CD8-positive, alpha-beta T cell (primary cell): ENCODE measurements at regions of chr16 and their contacts with region 1.

Region 1: GRCh38 chr16:10964039-10964890 is 19.9 kb downstream of the CLEC16A start:
- DNase-seq: peak; percentile 57 to 89 (median 82)
- ATAC-seq: peak; percentile 58
- H3K4me3 ChIP-seq: peak overlapping the region in 1 of 2 experiments; percentile 7
- H3K4me3 Mint-ChIP-seq: peak overlapping the region; percentile 18
- H3K27ac ChIP-seq: no peak overlapping the region
- H3K27ac Mint-ChIP-seq: peak overlapping the region; percentile 49
- H3K4me1 ChIP-seq: peaks cover 4% of the 10 kb centered on the region
- H3K4me1 Mint-ChIP-seq: peaks cover 16% of the 10 kb centered on the region
- H3K27me3 ChIP-seq: no peaks in the 10 kb centered on the region
- H3K27me3 Mint-ChIP-seq: no peaks in the 10 kb centered on the region
- CTCF ChIP-seq: peak; percentile 90

Region 2: GRCh38 chr16:10862432-10862831 is 101.8 kb before region 1 on chr16:
- CTCF ChIA-PET with region 1: no interaction called
- POLR2A ChIA-PET with region 1: no interaction called
- intact Hi-C with region 1: no loop called
- DNase-seq: peak in 1 of 9 experiments; percentile 35
- ATAC-seq: no peak
- H3K4me3 ChIP-seq: no peak overlapping the region
- H3K4me3 Mint-ChIP-seq: no peak overlapping the region
- H3K27ac ChIP-seq: no peak overlapping the region
- H3K27ac Mint-ChIP-seq: no peak overlapping the region
- H3K4me1 ChIP-seq: no peaks in the 10 kb centered on the region
- H3K4me1 Mint-ChIP-seq: no peaks in the 10 kb centered on the region
- H3K27me3 ChIP-seq: no peaks in the 10 kb centered on the region
- H3K27me3 Mint-ChIP-seq: peaks cover 13% of the 10 kb centered on the region
- CTCF ChIP-seq: no peak

Region 3: DNA sequence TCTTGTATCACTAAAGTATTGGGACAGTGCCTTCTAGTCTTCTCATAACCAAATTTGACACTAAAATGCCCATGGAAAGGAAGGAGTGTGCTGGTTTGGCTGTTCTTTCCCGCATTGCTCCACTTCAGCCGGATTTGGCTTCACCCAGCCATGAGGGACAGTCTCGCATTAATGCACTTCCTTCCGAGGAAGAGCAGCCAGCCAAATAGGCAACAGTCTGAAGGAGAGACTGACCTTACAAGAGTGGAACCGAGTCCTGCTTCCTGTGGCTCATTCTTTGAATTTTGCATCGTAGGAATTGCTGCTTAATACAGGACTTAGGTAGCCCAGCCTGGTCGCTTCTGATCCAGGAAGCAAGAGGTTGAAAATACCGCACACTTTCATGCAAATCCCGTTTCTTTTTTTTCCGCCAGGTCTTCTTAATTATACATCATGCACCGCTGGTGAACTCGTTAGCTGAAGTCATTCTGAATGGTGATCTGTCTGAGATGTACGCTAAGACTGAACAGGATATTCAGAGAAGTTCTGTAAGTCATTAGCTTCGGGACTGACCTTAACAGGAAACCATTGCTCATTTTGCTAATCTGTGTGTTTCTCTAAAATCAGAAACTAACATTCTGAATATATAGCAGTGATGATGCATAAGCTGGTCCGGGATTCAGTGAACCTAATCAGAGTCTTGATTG is 18.3 kb after region 1 on chr16:
- CTCF ChIA-PET with region 1: interaction called, 27 read pairs
- POLR2A ChIA-PET with region 1: no interaction called
- intact Hi-C with region 1: no loop called
- DNase-seq: no peak
- ATAC-seq: no peak
- H3K4me3 ChIP-seq: no peak overlapping the region
- H3K4me3 Mint-ChIP-seq: no peak overlapping the region
- H3K27ac ChIP-seq: no peak overlapping the region
- H3K27ac Mint-ChIP-seq: no peak overlapping the region
- H3K4me1 ChIP-seq: peaks cover 7% of the 10 kb centered on the region
- H3K4me1 Mint-ChIP-seq: peaks cover 15% of the 10 kb centered on the region
- H3K27me3 ChIP-seq: no peaks in the 10 kb centered on the region
- H3K27me3 Mint-ChIP-seq: no peaks in the 10 kb centered on the region
- CTCF ChIP-seq: no peak

Region 4: DNA sequence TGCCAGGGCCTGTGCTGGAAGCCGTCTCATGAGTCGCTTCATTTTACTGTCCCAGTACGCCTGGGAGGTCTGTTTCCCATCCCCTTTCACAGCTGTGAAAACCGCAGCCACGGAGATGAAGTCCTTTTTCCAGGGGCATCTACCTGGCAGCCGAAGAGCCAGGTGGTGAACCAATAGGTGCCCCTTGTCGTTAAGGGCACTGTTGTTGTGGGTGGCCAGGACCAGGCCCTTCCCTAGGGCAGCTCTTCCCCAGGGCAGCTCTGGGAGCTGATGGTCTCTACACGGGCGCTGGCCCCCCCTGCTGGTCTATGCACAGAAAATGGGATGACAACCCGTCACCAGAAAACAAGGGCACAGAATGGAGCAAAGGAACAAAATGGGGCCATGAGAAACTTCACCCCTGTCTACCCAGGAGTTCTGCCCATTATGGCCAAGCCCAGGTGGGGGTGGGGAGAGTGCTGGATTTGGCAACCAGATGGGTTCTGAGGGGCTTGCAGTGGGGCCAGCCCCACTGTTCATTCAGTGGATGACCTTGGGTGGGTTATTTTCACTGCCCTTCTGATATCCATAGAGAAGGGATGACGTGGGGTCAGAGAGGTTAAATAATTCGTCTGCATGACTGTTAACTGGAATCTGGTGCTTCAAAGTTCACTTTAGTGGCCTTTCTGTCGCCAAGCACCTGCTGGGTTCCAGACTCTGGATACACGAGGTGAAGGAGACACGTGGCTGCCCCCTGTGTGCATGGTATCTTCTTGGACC is 392.5 kb after region 1 on chr16:
- CTCF ChIA-PET with region 1: interaction called, 67 read pairs
- POLR2A ChIA-PET with region 1: interaction called, 3 read pairs
- intact Hi-C with region 1: no loop called
- DNase-seq: peak in 8 of 9 experiments; percentile 38 to 75 (median 62)
- ATAC-seq: no peak
- H3K4me3 ChIP-seq: no peak overlapping the region
- H3K4me3 Mint-ChIP-seq: no peak overlapping the region
- H3K27ac ChIP-seq: no peak overlapping the region
- H3K27ac Mint-ChIP-seq: peak overlapping the region; percentile 37
- H3K4me1 ChIP-seq: peaks cover 50% of the 10 kb centered on the region
- H3K4me1 Mint-ChIP-seq: peaks cover 58% of the 10 kb centered on the region
- H3K27me3 ChIP-seq: peaks cover 0 to 23% of the 10 kb centered on the region in 2 experiments
- H3K27me3 Mint-ChIP-seq: no peaks in the 10 kb centered on the region
- CTCF ChIP-seq: peak; percentile 50

Region 5: DNA sequence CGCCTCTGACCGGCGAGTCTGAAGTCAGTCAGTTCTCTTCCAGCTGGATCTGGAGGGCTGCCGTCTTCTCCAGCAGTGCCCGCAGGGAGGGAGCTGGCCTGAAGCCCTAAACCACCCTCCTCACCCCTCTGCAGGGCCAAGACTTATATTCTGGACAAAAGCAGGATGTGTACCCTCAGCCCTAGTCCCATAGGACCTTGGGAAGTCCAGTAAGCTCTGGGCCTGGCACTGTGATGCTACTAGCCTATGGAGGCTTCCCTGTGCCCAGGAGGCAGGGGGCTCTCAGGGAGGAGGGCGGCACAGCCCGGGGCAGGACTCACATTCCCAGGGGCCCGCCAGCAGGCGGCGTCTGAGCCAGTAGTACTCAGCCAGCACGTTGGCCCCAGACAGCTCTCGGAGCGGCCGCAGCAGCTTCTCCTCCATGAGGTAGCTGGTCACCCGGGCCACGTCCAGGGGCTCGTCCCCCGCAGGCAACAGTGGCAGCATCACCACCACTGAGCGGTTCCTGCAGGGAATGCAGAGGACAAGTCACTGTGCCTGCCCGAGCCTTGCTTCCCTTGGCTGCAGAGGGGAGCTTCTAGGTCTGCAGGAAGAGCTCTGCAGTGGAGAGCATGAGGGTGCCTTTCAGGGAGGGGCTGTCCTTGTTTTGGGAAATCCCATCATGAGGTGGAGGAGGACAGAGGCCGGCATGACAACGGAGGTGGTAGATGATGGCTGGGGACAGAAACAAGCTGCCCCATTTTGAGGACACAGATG is 422.7 kb after region 1 on chr16:
- CTCF ChIA-PET with region 1: interaction called, 13 read pairs
- POLR2A ChIA-PET with region 1: no interaction called
- intact Hi-C with region 1: no loop called
- DNase-seq: no peak
- ATAC-seq: no peak
- H3K4me3 ChIP-seq: no peak overlapping the region
- H3K4me3 Mint-ChIP-seq: no peak overlapping the region
- H3K27ac ChIP-seq: no peak overlapping the region
- H3K27ac Mint-ChIP-seq: no peak overlapping the region
- H3K4me1 ChIP-seq: no peaks in the 10 kb centered on the region
- H3K4me1 Mint-ChIP-seq: no peaks in the 10 kb centered on the region
- H3K27me3 ChIP-seq: no peaks in the 10 kb centered on the region
- H3K27me3 Mint-ChIP-seq: peaks cover 2% of the 10 kb centered on the region
- CTCF ChIP-seq: no peak

Region 6: GRCh38 chr16:11535471-11535870 is 571.2 kb after region 1 on chr16:
- CTCF ChIA-PET with region 1: interaction called, 7 read pairs
- POLR2A ChIA-PET with region 1: no interaction called
- intact Hi-C with region 1: loop called in 1 of 2 experiments (anchors 10 kb)
- DNase-seq: no peak
- ATAC-seq: no peak
- H3K4me3 ChIP-seq: no peak overlapping the region
- H3K4me3 Mint-ChIP-seq: no peak overlapping the region
- H3K27ac ChIP-seq: no peak overlapping the region
- H3K27ac Mint-ChIP-seq: no peak overlapping the region
- H3K4me1 ChIP-seq: no peaks in the 10 kb centered on the region
- H3K4me1 Mint-ChIP-seq: peaks cover 19% of the 10 kb centered on the region
- H3K27me3 ChIP-seq: no peaks in the 10 kb centered on the region
- H3K27me3 Mint-ChIP-seq: no peaks in the 10 kb centered on the region
- CTCF ChIP-seq: no peak